A673 (cell line): ENCODE measurements at regions of chr1 and their contacts with region 1.

Region 1: DNA sequence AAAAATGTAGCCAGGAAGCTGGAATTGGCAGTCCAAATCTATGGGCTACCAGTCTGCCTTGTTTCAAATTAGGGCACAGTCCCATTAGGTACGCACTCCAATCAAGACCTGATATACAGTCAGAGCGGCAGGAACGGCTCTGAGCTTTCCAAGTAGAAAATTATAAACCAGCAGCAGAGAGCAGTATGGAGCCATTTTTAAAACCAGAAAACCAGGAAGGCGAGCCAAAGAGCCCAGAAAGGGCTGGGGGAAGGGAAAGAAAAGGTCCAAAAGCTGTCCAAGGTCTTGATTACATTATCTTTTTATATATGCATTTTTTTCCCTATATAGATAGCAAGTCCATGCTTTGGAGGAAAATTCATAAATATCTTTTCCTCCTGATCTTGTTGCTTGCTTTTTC is 719.0 kb downstream of the RWDD3 start:
- DNase-seq: peak; percentile 50
- H3K4me3 ChIP-seq: no peak overlapping the region
- H3K27ac ChIP-seq: no peak overlapping the region
- H3K4me1 ChIP-seq: no peaks in the 10 kb centered on the region
- H3K27me3 ChIP-seq: no peaks in the 10 kb centered on the region
- CTCF ChIP-seq: peak; percentile 38; the same call in 1 of the 2 replicates

Region 2: GRCh38 chr1:94805912-94806311 is 1147.1 kb before region 1 on chr1:
- CTCF ChIA-PET with region 1: no interaction called
- POLR2A ChIA-PET with region 1: no interaction called
- intact Hi-C with region 1: no loop called
- DNase-seq: peak; percentile 70
- H3K4me3 ChIP-seq: no peak overlapping the region
- H3K27ac ChIP-seq: no peak overlapping the region
- H3K4me1 ChIP-seq: peaks cover 14% of the 10 kb centered on the region
- H3K27me3 ChIP-seq: no peaks in the 10 kb centered on the region
- CTCF ChIP-seq: peak; percentile 93

Region 3: GRCh38 chr1:96845464-96845863 is 892.4 kb after region 1 on chr1:
- CTCF ChIA-PET with region 1: no interaction called
- POLR2A ChIA-PET with region 1: no interaction called
- intact Hi-C with region 1: loop called (anchors 10 kb)
- DNase-seq: peak; percentile 53
- H3K4me3 ChIP-seq: no peak overlapping the region
- H3K27ac ChIP-seq: no peak overlapping the region
- H3K4me1 ChIP-seq: no peaks in the 10 kb centered on the region
- H3K27me3 ChIP-seq: no peaks in the 10 kb centered on the region
- CTCF ChIP-seq: peak; percentile 76